Psoas muscle (tissue), 8 donors: ENCODE measurements at regions of chr9 and their contacts with region 1.

Region 1: DNA sequence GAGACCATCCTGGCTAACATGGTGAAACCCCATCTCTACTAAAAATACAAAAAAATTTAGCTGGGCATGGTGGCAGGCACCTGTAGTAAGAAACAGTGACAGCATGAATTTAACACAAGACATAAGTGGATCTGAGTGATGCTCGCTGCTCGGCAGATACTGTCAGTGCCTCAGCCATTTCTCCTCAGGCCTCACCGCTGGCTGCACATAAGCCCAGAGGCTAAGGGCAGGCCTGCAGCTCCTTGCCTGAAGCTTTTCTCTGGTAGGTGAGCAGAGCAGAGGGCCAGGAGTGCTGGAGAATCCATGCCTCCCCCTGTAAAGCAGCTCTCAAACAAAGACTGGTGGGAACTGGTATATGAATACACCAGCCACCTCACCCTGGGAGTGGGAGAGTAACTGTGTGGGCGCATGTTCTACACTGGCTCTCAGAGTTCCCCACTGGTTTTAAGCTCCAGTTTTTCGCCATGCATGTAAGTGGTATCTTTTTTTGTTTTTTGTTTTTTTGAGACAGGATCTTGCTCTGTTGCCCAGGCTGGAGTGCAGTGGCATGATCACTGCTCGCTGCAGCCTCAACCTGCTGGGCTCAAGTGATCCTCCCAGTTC is 10.3 kb upstream of the CD72 start:
- DNase-seq: no peak
- ATAC-seq: no peak
- H3K4me3 ChIP-seq: no peak overlapping the region
- H3K27ac ChIP-seq: no peak overlapping the region
- H3K4me1 ChIP-seq: no peaks in the 10 kb centered on the region
- H3K27me3 ChIP-seq: no peaks in the 10 kb centered on the region
- CTCF ChIP-seq: no peak

Region 2: DNA sequence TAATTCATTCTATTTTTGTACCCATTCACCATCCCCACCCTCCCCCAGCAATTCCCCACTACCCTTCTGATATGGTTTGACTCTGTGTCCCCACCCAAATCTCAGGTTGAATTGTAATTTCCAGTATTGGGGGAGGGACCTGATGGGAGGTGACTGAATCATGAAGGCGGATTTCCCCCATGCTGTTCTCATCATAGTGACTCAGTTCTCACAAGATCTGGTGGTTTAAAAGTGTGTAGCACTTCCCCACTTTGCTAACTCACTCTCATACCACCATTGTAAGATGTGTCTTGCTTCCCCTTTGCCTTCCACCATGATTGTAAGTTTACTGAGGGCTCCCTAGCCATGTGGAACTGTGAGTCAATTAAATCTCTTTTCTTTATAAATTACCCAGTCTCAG is 49.4 kb before region 1 on chr9:
- intact Hi-C with region 1: loop called in 1 of 2 experiments (anchors 5 kb)
- DNase-seq: no peak
- ATAC-seq: peak in 1 of 4 donors; percentile 39
- H3K4me3 ChIP-seq: no peak overlapping the region
- H3K27ac ChIP-seq: no peak overlapping the region
- H3K4me1 ChIP-seq: no peaks in the 10 kb centered on the region
- H3K27me3 ChIP-seq: no peaks in the 10 kb centered on the region
- CTCF ChIP-seq: no peak